ENCODE measurements at regions of chr4 and their contacts with region 1.

Region 1: GRCh38 chr4:118909173-118909956 is 20.7 kb downstream of the SYNPO2 start:
- DNase-seq: no peak
- H3K4me3 ChIP-seq: no peak overlapping the region
- H3K27ac ChIP-seq: peak overlapping the region; percentile 25
- H3K4me1 ChIP-seq: peaks cover 41% of the 10 kb centered on the region
- H3K27me3 ChIP-seq: no peaks in the 10 kb centered on the region
- CTCF ChIP-seq: no peak
- POLR2A ChIP-seq: no peak

Region 2: DNA sequence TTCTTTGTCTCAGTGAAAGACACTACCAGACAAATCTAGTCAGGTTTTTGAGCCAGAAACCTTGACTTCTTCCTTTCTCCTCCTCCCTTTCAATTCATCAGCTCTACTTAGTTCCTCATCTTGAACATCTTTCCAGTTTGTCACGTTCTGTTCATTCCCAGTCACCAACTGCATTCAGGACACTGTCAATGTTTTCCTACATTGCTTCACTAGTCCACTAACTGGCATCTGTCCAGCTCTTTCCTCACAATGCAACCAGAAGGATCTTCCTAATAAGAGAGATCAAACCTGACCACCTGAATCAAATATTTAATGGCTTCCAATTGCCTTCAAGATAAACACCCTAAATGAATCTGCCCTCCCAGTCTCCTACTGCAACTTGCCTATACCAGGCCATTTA is 31.8 kb after region 1 on chr4:
- intact Hi-C with region 1: loop called (anchors 1 kb)
- DNase-seq: no peak
- H3K4me3 ChIP-seq: no peak overlapping the region
- H3K27ac ChIP-seq: no peak overlapping the region
- H3K4me1 ChIP-seq: peaks cover 22% of the 10 kb centered on the region
- H3K27me3 ChIP-seq: no peaks in the 10 kb centered on the region
- CTCF ChIP-seq: no peak
- POLR2A ChIP-seq: no peak

Measured in vagina (tissue), 2 donors.